ENCODE measurements at regions of chr17 and their contacts with region 1.

Region 1: GRCh38 chr17:44210342-44211192 is 8.9 kb downstream of the UBTF start:
- DNase-seq: peak; percentile 71
- H3K4me3 ChIP-seq: no peak overlapping the region
- H3K27ac ChIP-seq: peak overlapping the region; percentile 42
- H3K27me3 ChIP-seq: no peaks in the 10 kb centered on the region
- CTCF ChIP-seq: peak; percentile 94

Region 2: GRCh38 chr17:44186307-44187130 is 24.0 kb before region 1 on chr17 and contains the start of gene TMUB2:
- CTCF ChIA-PET with region 1: interaction called, 15 read pairs
- POLR2A ChIA-PET with region 1: interaction called, 6 read pairs
- DNase-seq: peak; percentile 99
- H3K4me3 ChIP-seq: peak within 1 kb of the TSS; percentile 97
- H3K27ac ChIP-seq: peak within 1 kb of the TSS; percentile 97
- H3K27me3 ChIP-seq: no peaks in the 10 kb centered on the region
- CTCF ChIP-seq: no peak
- polyA plus RNA-seq, gene TMUB2: 34.3 and 37.1 TPM in 2 replicates

Region 3: GRCh38 chr17:44293509-44294226 is 83.1 kb after region 1 on chr17:
- CTCF ChIA-PET with region 1: no interaction called
- POLR2A ChIA-PET with region 1: no interaction called
- DNase-seq: no peak
- H3K4me3 ChIP-seq: no peak overlapping the region
- H3K27ac ChIP-seq: no peak overlapping the region
- H3K27me3 ChIP-seq: peaks cover 25% of the 10 kb centered on the region
- CTCF ChIP-seq: no peak

Region 4: GRCh38 chr17:44331249-44331760 is 120.7 kb after region 1 on chr17:
- CTCF ChIA-PET with region 1: interaction called, 16 read pairs
- POLR2A ChIA-PET with region 1: interaction called, 3 read pairs
- DNase-seq: no peak
- H3K4me3 ChIP-seq: no peak overlapping the region
- H3K27ac ChIP-seq: no peak overlapping the region
- H3K27me3 ChIP-seq: peaks cover 10% of the 10 kb centered on the region
- CTCF ChIP-seq: peak; percentile 74

Region 5: DNA sequence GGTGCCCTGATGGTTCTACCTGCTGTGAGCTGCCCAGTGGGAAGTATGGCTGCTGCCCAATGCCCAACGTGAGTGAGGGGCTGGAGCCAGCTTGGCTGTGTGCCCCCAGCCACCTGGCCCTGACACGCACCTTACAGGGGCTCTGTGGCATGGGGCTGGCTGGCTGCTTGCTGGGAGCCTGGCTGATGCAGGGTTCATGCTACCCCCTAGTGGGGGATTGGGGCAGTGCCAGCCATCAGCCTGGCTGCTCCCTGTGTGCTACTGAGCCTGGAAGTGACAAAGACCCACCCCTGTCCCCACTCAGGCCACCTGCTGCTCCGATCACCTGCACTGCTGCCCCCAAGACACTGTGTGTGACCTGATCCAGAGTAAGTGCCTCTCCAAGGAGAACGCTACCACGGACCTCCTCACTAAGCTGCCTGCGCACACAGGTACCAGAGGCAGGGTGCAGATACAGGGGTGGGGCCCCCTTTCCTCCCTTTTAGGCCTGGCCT is 140.2 kb after region 1 on chr17:
- CTCF ChIA-PET with region 1: interaction called, 21 read pairs
- POLR2A ChIA-PET with region 1: no interaction called
- DNase-seq: no peak
- H3K4me3 ChIP-seq: no peak overlapping the region
- H3K27ac ChIP-seq: no peak overlapping the region
- H3K27me3 ChIP-seq: no peaks in the 10 kb centered on the region
- CTCF ChIP-seq: peak; percentile 81